WTC11 (cell line): ENCODE measurements at regions of chr7 and their contacts with region 1.

Region 1: GRCh38 chr7:24381894-24382505 is 98.0 kb downstream of the NPY start:
- DNase-seq: no peak
- ATAC-seq: peak; percentile 68
- H3K4me3 Mint-ChIP-seq: no peak overlapping the region
- H3K27ac Mint-ChIP-seq: peak overlapping the region; percentile 89
- H3K4me1 Mint-ChIP-seq: peaks cover 63% of the 10 kb centered on the region
- H3K27me3 Mint-ChIP-seq: no peaks in the 10 kb centered on the region
- CTCF ChIP-seq: 0 out of 2 replicates have a peak, but pooled peaks have one; percentile 20

Region 2: DNA sequence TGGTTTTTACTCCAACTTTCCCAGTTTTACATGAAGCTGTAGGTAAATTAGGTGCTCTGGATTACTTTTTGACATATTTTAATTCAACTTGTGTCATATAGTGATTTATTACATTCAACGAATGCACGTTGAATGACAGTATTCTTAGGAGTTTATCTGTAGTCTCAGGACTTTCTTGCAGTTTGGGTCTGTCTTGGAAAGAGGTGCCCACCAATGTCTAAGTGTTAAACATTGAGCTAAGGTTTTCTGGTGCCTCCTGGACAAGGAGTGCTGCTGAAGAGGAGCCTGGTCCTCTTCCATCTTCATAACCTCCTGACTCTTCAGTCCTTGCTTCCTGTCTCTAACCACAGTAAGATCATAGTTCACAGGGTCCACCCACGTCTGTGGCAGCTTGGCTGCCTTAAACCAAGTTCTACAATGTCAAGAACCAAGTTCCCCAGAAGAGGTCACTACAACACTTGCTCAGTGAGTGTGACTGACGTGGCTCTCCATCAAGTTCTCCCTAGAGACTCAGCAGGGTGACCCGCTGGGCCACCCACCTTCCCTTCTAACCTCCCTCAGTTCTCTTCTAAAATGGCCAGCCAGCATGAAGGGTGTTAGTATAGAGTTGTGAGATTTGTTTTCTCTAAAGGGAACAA is 91.9 kb before region 1 on chr7:
- CTCF ChIA-PET with region 1: interaction called, 14 read pairs
- POLR2A ChIA-PET with region 1: no interaction called
- DNase-seq: peak; percentile 36
- ATAC-seq: peak; percentile 87
- H3K4me3 Mint-ChIP-seq: no peak overlapping the region
- H3K27ac Mint-ChIP-seq: 0 out of 2 replicates have a peak overlapping the region, but pooled peaks have one; percentile 17
- H3K4me1 Mint-ChIP-seq: peaks cover 43% of the 10 kb centered on the region
- H3K27me3 Mint-ChIP-seq: no peaks in the 10 kb centered on the region; the same call in none of the 2 replicates
- CTCF ChIP-seq: peak; percentile 21; the same call in 1 of the 2 replicates

Region 3: GRCh38 chr7:24336461-24336860 is 45.5 kb before region 1 on chr7:
- CTCF ChIA-PET with region 1: interaction called, 13 read pairs
- POLR2A ChIA-PET with region 1: interaction called, 4 read pairs
- DNase-seq: no peak
- ATAC-seq: no peak
- H3K4me3 Mint-ChIP-seq: peak overlapping the region; percentile 56
- H3K27ac Mint-ChIP-seq: no peak overlapping the region
- H3K4me1 Mint-ChIP-seq: peaks cover 35% of the 10 kb centered on the region
- H3K27me3 Mint-ChIP-seq: peaks cover 54% of the 10 kb centered on the region
- CTCF ChIP-seq: no peak

Region 4: DNA sequence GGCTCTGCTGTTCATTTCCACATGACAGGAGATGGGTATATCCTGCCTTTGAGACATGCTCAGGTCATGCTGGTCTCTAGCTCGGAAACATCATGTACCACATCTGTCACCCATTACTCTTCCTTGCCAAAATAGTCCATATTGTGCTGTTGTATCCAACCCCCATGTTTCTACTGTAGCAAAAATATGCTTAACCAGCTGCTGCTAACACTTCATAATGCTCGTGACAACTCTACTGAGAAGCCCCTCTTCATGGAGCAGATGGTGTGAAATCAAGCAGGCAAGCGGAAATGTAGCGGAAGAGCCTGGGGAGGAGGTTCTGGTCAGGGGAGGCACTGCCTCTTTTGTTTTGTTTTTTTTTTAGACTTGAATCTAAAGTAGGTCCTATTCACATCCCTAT is 15.1 kb before region 1 on chr7:
- CTCF ChIA-PET with region 1: interaction called, 12 read pairs
- POLR2A ChIA-PET with region 1: no interaction called
- DNase-seq: no peak
- ATAC-seq: no peak
- H3K4me3 Mint-ChIP-seq: no peak overlapping the region
- H3K27ac Mint-ChIP-seq: no peak overlapping the region
- H3K4me1 Mint-ChIP-seq: peaks cover 11% of the 10 kb centered on the region
- H3K27me3 Mint-ChIP-seq: no peaks in the 10 kb centered on the region; the same call in 1 of the 2 replicates
- CTCF ChIP-seq: no peak

Region 5: GRCh38 chr7:24392774-24393173 is 10.8 kb after region 1 on chr7:
- CTCF ChIA-PET with region 1: interaction called, 25 read pairs
- POLR2A ChIA-PET with region 1: no interaction called
- DNase-seq: no peak
- ATAC-seq: peak; percentile 69
- H3K4me3 Mint-ChIP-seq: no peak overlapping the region
- H3K27ac Mint-ChIP-seq: peak overlapping the region; percentile 71
- H3K4me1 Mint-ChIP-seq: peaks cover 41% of the 10 kb centered on the region
- H3K27me3 Mint-ChIP-seq: no peaks in the 10 kb centered on the region
- CTCF ChIP-seq: no peak

Region 6: GRCh38 chr7:24419077-24419476 is 37.1 kb after region 1 on chr7:
- CTCF ChIA-PET with region 1: no interaction called
- POLR2A ChIA-PET with region 1: no interaction called
- DNase-seq: no peak
- ATAC-seq: peak; percentile 93
- H3K4me3 Mint-ChIP-seq: no peak overlapping the region
- H3K27ac Mint-ChIP-seq: no peak overlapping the region
- H3K4me1 Mint-ChIP-seq: peaks cover 16% of the 10 kb centered on the region
- H3K27me3 Mint-ChIP-seq: peaks cover 39% of the 10 kb centered on the region
- CTCF ChIP-seq: no peak